CD4-positive, alpha-beta T cell (primary cell): ENCODE measurements at regions of chr15 and their contacts with region 1.

Region 1: GRCh38 chr15:38647683-38648082 is 83.1 kb upstream of the RASGRP1 start:
- DNase-seq: no peak
- ATAC-seq: no peak
- H3K4me3 ChIP-seq: no peak overlapping the region
- H3K4me3 Mint-ChIP-seq: peak overlapping the region; percentile 4
- H3K27ac ChIP-seq: peak overlapping the region in 1 of 2 donors; percentile 20
- H3K27ac Mint-ChIP-seq: peak overlapping the region; percentile 93
- H3K4me1 ChIP-seq: peaks cover 62% of the 10 kb centered on the region
- H3K4me1 Mint-ChIP-seq: peaks cover 81% of the 10 kb centered on the region
- H3K27me3 ChIP-seq: no peaks in the 10 kb centered on the region
- H3K27me3 Mint-ChIP-seq: no peaks in the 10 kb centered on the region
- CTCF ChIP-seq: no peak

Region 2: DNA sequence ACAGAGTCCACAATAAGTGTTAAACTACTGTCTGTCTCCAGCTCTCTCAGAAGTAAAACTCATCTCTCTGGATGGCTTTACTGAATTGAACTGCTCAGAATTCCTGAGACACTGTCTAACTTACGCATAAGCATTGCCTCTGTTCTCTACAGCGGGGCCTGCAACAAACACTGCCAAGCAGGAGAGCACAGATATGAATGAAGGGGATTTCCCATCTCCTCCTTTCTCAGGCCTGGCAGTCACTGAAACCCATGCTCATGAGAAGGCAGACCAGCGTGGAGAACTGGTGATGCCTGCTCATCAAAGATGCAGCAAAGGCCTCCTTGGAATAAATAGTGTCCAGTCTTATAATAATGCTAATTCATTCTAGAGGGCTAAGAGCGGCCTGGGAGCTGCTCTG is 93.3 kb before region 1 on chr15:
- CTCF ChIA-PET with region 1: interaction called, 3 read pairs
- POLR2A ChIA-PET with region 1: interaction called, 277 read pairs
- intact Hi-C with region 1: no loop called
- DNase-seq: peak in 4 of 14 experiments; percentile 35 to 74 (median 56)
- ATAC-seq: peak; percentile 65
- H3K4me3 ChIP-seq: peak overlapping the region; percentile 4
- H3K4me3 Mint-ChIP-seq: peak overlapping the region; percentile 58
- H3K27ac ChIP-seq: peak overlapping the region; percentile 36 to 51
- H3K27ac Mint-ChIP-seq: peak overlapping the region; percentile 93
- H3K4me1 ChIP-seq: peaks cover 72% of the 10 kb centered on the region
- H3K4me1 Mint-ChIP-seq: peaks cover 94% of the 10 kb centered on the region
- H3K27me3 ChIP-seq: no peaks in the 10 kb centered on the region
- H3K27me3 Mint-ChIP-seq: no peaks in the 10 kb centered on the region
- CTCF ChIP-seq: no peak

Region 3: GRCh38 chr15:38624244-38625205 is 23.2 kb before region 1 on chr15:
- CTCF ChIA-PET with region 1: interaction called, 5 read pairs
- POLR2A ChIA-PET with region 1: interaction called, 33 read pairs
- intact Hi-C with region 1: no loop called
- DNase-seq: no peak
- ATAC-seq: no peak
- H3K4me3 ChIP-seq: no peak overlapping the region
- H3K4me3 Mint-ChIP-seq: no peak overlapping the region
- H3K27ac ChIP-seq: no peak overlapping the region
- H3K27ac Mint-ChIP-seq: no peak overlapping the region
- H3K4me1 ChIP-seq: peaks cover 16% of the 10 kb centered on the region
- H3K4me1 Mint-ChIP-seq: peaks cover 37% of the 10 kb centered on the region
- H3K27me3 ChIP-seq: no peaks in the 10 kb centered on the region
- H3K27me3 Mint-ChIP-seq: no peaks in the 10 kb centered on the region
- CTCF ChIP-seq: no peak

Region 4: DNA sequence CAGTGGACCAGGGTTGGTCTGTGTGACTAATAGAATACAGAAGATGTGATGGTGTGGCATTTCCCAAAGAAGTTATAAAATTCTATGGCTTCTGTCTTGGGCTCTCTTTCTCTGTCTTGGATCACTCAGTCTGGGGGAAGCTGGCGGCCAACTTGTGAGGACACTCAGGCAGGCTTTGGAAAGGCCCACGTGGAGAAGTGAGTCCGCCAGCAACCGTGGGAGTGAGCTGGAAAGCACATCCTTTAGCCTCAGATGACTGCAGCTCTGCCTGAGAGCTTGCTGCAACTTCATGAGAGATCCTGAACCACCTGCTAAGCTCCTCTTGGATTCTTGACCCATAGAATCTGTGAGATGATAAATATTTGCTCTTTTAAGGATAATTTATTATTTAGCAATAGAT is 11.1 kb before region 1 on chr15:
- CTCF ChIA-PET with region 1: interaction called, 3 read pairs
- POLR2A ChIA-PET with region 1: interaction called, 33 read pairs
- intact Hi-C with region 1: no loop called
- DNase-seq: no peak
- ATAC-seq: no peak
- H3K4me3 ChIP-seq: no peak overlapping the region
- H3K4me3 Mint-ChIP-seq: no peak overlapping the region
- H3K27ac ChIP-seq: no peak overlapping the region
- H3K27ac Mint-ChIP-seq: no peak overlapping the region
- H3K4me1 ChIP-seq: peaks cover 20% of the 10 kb centered on the region
- H3K4me1 Mint-ChIP-seq: peaks cover 30% of the 10 kb centered on the region
- H3K27me3 ChIP-seq: no peaks in the 10 kb centered on the region
- H3K27me3 Mint-ChIP-seq: no peaks in the 10 kb centered on the region
- CTCF ChIP-seq: no peak

Region 5: GRCh38 chr15:38678246-38678645 is 30.6 kb after region 1 on chr15:
- CTCF ChIA-PET with region 1: interaction called, 34 read pairs
- POLR2A ChIA-PET with region 1: interaction called, 484 read pairs
- intact Hi-C with region 1: loop called in 1 of 2 experiments (anchors 2 kb)
- DNase-seq: no peak
- ATAC-seq: no peak
- H3K4me3 ChIP-seq: no peak overlapping the region
- H3K4me3 Mint-ChIP-seq: no peak overlapping the region
- H3K27ac ChIP-seq: no peak overlapping the region
- H3K27ac Mint-ChIP-seq: no peak overlapping the region
- H3K4me1 ChIP-seq: peaks cover 33% of the 10 kb centered on the region
- H3K4me1 Mint-ChIP-seq: peaks cover 60% of the 10 kb centered on the region
- H3K27me3 ChIP-seq: no peaks in the 10 kb centered on the region
- H3K27me3 Mint-ChIP-seq: no peaks in the 10 kb centered on the region
- CTCF ChIP-seq: no peak

Region 6: DNA sequence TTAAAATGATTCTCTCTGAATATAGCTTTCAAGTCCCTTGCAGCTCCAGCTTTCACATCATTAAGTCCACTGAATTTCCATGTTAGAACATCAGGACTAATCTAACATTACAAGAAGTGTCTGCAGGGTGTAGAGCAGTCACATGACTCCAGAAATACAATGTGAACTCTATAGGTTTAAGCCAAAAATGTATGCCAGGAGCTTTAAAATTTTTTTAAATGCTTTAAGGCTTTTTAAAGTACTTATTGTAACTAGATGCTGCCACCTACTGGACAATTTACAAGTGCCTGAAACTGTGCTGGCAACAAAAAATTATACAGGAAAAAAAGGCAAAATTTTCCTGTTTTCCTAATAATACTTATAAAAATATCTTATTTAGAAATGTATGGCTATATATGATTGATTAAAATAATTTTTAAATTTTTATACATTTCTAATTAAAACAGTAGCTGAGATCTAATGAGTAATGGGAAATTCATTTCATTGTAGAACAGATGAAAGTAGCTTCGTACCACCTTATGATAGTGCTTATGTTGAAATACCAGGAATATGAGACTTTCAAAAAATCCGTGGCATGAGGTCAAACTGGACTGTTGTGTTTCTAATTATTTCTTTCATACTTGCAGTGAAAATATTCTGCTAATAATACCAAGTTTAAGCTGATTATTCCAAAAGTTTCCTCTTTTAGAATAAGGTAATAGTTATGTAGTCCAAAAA is 1109.3 kb after region 1 on chr15:
- CTCF ChIA-PET with region 1: no interaction called
- POLR2A ChIA-PET with region 1: no interaction called
- intact Hi-C with region 1: no loop called
- DNase-seq: peak in 5 of 14 experiments; percentile 3 to 75 (median 65)
- ATAC-seq: no peak
- H3K4me3 ChIP-seq: no peak overlapping the region
- H3K4me3 Mint-ChIP-seq: no peak overlapping the region
- H3K27ac ChIP-seq: no peak overlapping the region
- H3K27ac Mint-ChIP-seq: no peak overlapping the region
- H3K4me1 ChIP-seq: no peaks in the 10 kb centered on the region
- H3K4me1 Mint-ChIP-seq: no peaks in the 10 kb centered on the region
- H3K27me3 ChIP-seq: no peaks in the 10 kb centered on the region
- H3K27me3 Mint-ChIP-seq: peaks cover 7% of the 10 kb centered on the region
- CTCF ChIP-seq: peak; percentile 97